Activated CD8-positive, alpha-beta T cell treated with anti-CD3 and anti-CD28 coated beads, Interleukin-2, amount 10 ng/mL, durations not matched to agents 7 days and 5 days (primary cell): ENCODE measurements at regions of chr20 and their contacts with region 1.

Region 1: GRCh38 chr20:1734269-1734858 is 76.8 kb upstream of the SIRPG start:
- DNase-seq: peak; percentile 62
- ATAC-seq: peak; percentile 88
- H3K4me3 Mint-ChIP-seq: no peak overlapping the region
- H3K27ac Mint-ChIP-seq: no peak overlapping the region
- H3K4me1 Mint-ChIP-seq: peaks cover 37% of the 10 kb centered on the region
- H3K27me3 Mint-ChIP-seq: no peaks in the 10 kb centered on the region

Region 2: GRCh38 chr20:1537731-1538058 is 196.7 kb before region 1 on chr20:
- CTCF ChIA-PET with region 1: interaction called, 26 read pairs
- POLR2A ChIA-PET with region 1: no interaction called
- DNase-seq: no peak
- ATAC-seq: no peak
- H3K4me3 Mint-ChIP-seq: no peak overlapping the region
- H3K27ac Mint-ChIP-seq: peak overlapping the region; percentile 43
- H3K4me1 Mint-ChIP-seq: peaks cover 9% of the 10 kb centered on the region
- H3K27me3 Mint-ChIP-seq: peaks cover 1% of the 10 kb centered on the region

Region 3: GRCh38 chr20:1651268-1652058 is 82.9 kb before region 1 on chr20:
- CTCF ChIA-PET with region 1: interaction called, 13 read pairs
- POLR2A ChIA-PET with region 1: interaction called, 8 read pairs
- DNase-seq: no peak
- ATAC-seq: peak; percentile 19
- H3K4me3 Mint-ChIP-seq: peak overlapping the region; percentile 19
- H3K27ac Mint-ChIP-seq: peak overlapping the region; percentile 74
- H3K4me1 Mint-ChIP-seq: peaks cover 83% of the 10 kb centered on the region
- H3K27me3 Mint-ChIP-seq: no peaks in the 10 kb centered on the region

Region 4: GRCh38 chr20:1663917-1664316 is 70.4 kb before region 1 on chr20:
- CTCF ChIA-PET with region 1: interaction called, 19 read pairs
- POLR2A ChIA-PET with region 1: interaction called, 3 read pairs
- DNase-seq: peak; percentile 33
- ATAC-seq: no peak
- H3K4me3 Mint-ChIP-seq: peak overlapping the region; percentile 1
- H3K27ac Mint-ChIP-seq: peak overlapping the region; percentile 87
- H3K4me1 Mint-ChIP-seq: peaks cover 95% of the 10 kb centered on the region
- H3K27me3 Mint-ChIP-seq: no peaks in the 10 kb centered on the region

Region 5: DNA sequence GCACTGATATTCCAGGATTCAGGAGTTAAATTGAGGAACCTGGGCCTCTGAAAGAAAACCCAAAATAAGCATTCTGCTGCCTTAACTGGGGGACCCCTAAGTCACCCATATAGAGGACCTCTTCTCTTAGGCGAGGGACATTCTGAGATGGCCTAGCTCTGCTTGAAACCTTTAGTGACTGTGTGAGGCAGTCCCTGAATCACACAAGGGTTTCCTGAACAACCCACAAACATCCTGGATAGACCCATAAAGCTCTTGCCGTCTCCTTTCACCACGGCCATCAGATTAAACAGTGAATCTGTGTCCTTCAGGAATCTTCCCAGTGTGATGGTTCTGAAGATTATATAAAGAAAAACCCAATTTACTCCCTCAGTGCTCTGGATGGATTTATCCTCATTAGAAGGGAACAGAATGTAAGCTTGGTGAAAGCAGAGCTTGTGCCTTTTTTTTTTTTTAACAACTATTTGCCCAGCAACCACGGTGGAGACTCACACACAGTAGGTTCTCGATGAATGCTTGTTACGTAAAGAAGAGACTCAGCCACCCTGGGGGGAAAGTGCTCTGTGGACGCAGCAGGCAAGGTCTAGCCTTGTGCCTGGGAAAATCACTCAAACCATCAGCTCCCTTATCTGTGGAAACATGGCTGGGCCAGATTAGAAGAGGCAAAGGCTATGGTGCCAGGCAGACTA is 37.7 kb before region 1 on chr20:
- CTCF ChIA-PET with region 1: interaction called, 15 read pairs
- POLR2A ChIA-PET with region 1: no interaction called
- DNase-seq: peak; percentile 52
- ATAC-seq: peak; percentile 91
- H3K4me3 Mint-ChIP-seq: peak overlapping the region; percentile 16
- H3K27ac Mint-ChIP-seq: peak overlapping the region; percentile 70
- H3K4me1 Mint-ChIP-seq: peaks cover 25% of the 10 kb centered on the region
- H3K27me3 Mint-ChIP-seq: peaks cover 7% of the 10 kb centered on the region